ENCODE measurements at regions of chrX and their contacts with region 1.

Region 1: DNA sequence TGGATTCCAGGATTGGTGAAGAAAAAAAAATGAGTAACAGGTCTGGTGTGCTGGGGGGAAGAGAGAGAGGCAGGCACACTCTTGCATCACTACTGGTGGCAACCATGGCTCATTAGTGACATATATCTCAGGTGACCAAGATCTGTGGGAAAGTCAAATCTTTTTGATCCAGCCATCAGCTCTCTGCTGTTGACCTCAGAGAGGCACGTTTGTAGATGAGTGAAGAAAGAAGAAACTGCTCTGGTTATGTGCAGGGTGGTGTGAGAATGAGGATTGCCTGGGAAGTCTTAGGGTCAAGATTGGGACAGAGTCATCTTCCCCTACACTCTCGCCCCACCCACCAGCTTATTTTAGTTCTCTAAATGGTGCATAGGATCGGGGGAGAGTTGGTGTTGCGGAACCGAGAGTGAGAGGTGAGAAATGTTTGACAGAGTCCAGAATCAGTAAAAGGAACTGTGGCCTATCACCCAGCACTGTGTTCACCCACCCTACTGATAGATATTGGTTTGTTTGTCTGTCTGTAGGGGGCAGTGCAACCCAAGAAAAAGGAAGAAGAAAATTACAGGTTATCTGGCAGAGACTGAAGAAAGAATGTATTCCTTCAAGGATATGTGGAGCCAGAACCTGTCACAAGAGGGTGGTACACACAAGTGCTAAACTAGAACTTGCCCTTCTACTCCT is 21.9 kb downstream of the ARMCX6 start:
- DNase-seq: peak; percentile 71
- H3K4me3 Mint-ChIP-seq: no peak overlapping the region
- H3K27ac Mint-ChIP-seq: no peak overlapping the region
- H3K4me1 Mint-ChIP-seq: no peaks in the 10 kb centered on the region
- H3K27me3 Mint-ChIP-seq: peaks cover 44% of the 10 kb centered on the region
- CTCF ChIP-seq: peak; percentile 65

Region 2: DNA sequence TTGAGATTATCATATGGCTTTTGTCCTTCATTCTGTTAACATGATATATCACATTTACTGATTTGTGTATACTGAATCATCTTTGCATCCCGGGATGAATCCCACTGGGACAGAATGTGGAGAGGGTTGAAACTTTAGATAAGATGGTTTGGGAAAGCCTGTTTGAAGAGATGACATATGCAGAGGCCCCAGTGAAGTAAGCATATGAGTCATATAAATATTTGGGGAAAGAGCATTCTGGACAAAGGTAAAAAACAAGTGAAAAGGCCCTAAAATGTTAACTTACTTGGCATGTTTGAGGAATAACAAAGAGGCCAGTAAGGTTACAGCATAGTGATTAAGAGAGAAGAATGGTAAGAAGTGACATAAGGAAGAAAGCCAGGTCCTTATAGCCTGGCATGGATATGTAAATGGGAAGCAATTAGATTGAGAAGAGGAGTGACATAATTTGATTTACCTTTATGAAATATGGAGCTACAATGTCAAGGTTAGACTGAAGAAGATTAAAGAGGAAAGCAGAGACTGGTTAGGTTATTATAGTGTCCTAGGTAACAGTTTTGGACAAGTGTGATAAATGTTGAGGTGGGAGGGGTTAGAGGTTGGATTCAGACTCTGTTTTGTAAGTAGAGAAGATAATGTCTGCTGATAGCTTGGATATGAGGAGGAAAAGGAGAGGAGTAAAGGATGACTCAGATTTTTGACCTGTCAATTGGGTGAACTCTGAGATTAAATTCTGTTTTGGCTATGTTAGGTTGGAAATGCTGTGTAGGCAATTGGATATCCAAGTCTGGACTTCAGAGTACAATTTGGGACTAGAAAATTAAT is 430.9 kb before region 1 on chrX:
- CTCF ChIA-PET with region 1: no interaction called
- POLR2A ChIA-PET with region 1: no interaction called
- intact Hi-C with region 1: no loop called
- DNase-seq: no peak
- H3K4me3 Mint-ChIP-seq: no peak overlapping the region
- H3K27ac Mint-ChIP-seq: no peak overlapping the region
- H3K4me1 Mint-ChIP-seq: no peaks in the 10 kb centered on the region
- H3K27me3 Mint-ChIP-seq: peaks cover 17% of the 10 kb centered on the region
- CTCF ChIP-seq: no peak

Region 3: DNA sequence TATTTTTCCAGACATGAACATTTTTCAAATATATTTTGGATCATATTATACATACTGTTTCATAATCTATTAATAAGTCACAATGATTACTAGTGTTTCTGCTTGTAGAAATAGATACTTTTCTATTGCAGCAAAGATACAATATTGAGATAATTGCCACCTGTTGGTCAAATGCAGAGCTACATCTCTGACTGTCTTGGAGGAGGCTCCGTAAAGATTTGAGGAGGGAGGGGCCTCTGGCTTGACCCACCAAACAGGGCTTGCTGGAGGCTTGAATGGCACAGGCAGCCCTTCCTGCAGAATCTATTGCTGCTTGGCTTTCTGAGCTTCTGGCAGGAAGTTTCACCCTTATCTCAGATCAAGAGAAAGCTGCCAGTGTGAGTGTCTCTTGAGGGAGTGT is 163.1 kb after region 1 on chrX:
- CTCF ChIA-PET with region 1: interaction called, 10 read pairs
- POLR2A ChIA-PET with region 1: no interaction called
- intact Hi-C with region 1: loop called (anchors 5 kb)
- DNase-seq: peak; percentile 46
- H3K4me3 Mint-ChIP-seq: no peak overlapping the region
- H3K27ac Mint-ChIP-seq: no peak overlapping the region
- H3K4me1 Mint-ChIP-seq: no peaks in the 10 kb centered on the region
- H3K27me3 Mint-ChIP-seq: peaks cover 91% of the 10 kb centered on the region
- CTCF ChIP-seq: peak; percentile 42

Region 4: DNA sequence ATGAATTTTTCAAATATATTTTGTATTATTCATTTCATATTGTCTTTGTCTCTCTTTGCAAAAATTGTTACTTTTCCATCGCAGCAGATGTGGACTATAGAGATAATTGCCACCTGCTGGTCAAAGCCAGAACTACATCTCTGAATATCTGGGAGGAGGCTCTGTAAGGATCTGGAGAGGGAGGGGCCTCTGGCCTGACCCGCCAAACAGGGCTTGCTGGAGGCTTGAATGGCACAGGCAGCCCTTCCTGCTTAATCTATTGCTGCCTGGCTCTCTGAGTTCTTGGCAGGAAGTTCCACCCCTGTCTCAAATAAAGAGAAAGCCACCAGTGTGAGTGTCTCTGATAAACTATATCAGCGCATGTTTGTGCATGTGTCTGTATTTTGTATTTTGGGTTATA is 203.5 kb after region 1 on chrX:
- CTCF ChIA-PET with region 1: interaction called, 6 read pairs
- POLR2A ChIA-PET with region 1: no interaction called
- intact Hi-C with region 1: loop called (anchors 5 kb)
- DNase-seq: peak; percentile 91
- H3K4me3 Mint-ChIP-seq: no peak overlapping the region
- H3K27ac Mint-ChIP-seq: no peak overlapping the region
- H3K4me1 Mint-ChIP-seq: no peaks in the 10 kb centered on the region
- H3K27me3 Mint-ChIP-seq: peaks cover 27% of the 10 kb centered on the region
- CTCF ChIP-seq: peak; percentile 66

Region 5: DNA sequence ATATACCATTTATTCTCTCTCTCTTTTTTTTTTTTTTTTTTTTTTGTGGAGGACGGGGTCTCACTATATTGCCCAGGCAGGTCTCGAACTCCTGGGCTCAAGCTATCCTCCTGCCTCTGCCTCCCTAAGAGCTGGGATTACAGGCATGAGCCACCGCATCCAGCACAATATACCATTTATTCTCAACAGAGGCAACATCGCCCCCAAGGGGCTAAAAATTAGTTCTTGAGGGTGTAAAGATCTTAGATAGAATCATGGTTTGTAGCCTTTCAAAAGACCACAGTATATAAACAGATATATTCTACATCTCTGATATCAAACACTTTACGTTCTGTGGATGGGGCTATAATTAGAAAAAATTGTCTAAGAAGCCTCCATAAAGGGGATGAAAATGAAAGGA is 489.8 kb after region 1 on chrX:
- CTCF ChIA-PET with region 1: no interaction called
- POLR2A ChIA-PET with region 1: no interaction called
- intact Hi-C with region 1: loop called (anchors 5 kb)
- DNase-seq: peak; percentile 23
- H3K4me3 Mint-ChIP-seq: no peak overlapping the region
- H3K27ac Mint-ChIP-seq: no peak overlapping the region
- H3K4me1 Mint-ChIP-seq: no peaks in the 10 kb centered on the region
- H3K27me3 Mint-ChIP-seq: peaks cover 53% of the 10 kb centered on the region
- CTCF ChIP-seq: peak; percentile 4

Region 6: GRCh38 chrX:102720237-102721168 is 1124.6 kb after region 1 on chrX and contains the start of gene GPRASP3:
- CTCF ChIA-PET with region 1: no interaction called
- POLR2A ChIA-PET with region 1: no interaction called
- intact Hi-C with region 1: no loop called
- DNase-seq: peak; percentile 63
- H3K4me3 Mint-ChIP-seq: peak within 1 kb of the TSS; percentile 82
- H3K27ac Mint-ChIP-seq: peak within 1 kb of the TSS; percentile 29
- H3K4me1 Mint-ChIP-seq: no peaks in the 10 kb centered on the region
- H3K27me3 Mint-ChIP-seq: peaks cover 23% of the 10 kb centered on the region
- CTCF ChIP-seq: no peak
- total RNA-seq, gene GPRASP3: 1.6 and 2.5 TPM in 2 replicates

Region 7: DNA sequence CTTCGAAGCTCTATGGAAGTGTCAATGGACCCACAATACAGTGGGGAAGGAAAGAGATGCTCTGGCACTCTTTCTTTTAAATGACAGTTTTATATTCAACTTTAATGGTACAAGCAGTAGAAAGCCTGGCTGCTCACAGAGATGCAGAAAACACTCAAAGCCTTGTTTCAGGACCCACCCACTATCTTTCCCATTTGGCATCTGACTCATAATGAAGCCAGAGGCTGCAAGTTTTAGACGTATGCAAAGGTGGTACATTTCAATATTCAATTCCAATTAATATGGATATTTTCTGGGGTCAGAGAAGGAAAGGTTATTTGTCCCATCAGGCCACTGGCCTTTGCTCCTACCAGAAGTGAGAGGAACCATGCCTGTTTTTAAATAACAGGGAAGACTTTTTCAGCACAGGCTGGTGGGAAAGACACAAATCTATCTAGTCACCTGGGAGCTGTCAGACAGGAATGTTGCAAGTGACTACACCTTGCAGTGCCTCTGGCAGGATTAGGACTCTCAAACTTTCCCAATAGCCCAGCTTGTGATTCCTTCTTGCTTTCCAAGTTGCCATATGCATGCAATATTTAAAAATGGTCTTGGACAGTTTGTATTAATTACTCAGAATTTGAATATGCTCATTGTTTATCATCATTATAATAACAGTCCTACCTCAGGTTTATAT is 1271.2 kb after region 1 on chrX:
- CTCF ChIA-PET with region 1: no interaction called
- POLR2A ChIA-PET with region 1: no interaction called
- intact Hi-C with region 1: no loop called
- DNase-seq: no peak
- H3K4me3 Mint-ChIP-seq: no peak overlapping the region
- H3K27ac Mint-ChIP-seq: no peak overlapping the region
- H3K4me1 Mint-ChIP-seq: no peaks in the 10 kb centered on the region
- H3K27me3 Mint-ChIP-seq: peaks cover 32% of the 10 kb centered on the region
- CTCF ChIP-seq: no peak